Dorsolateral prefrontal cortex (tissue), 120 donors: ENCODE measurements at regions of chr1 and their contacts with region 1.

Region 1: GRCh38 chr1:84122780-84123382 is 21.2 kb upstream of the PRKACB start:
- DNase-seq: peak in 9 of 10 donors; percentile 27 to 85 (median 53)
- H3K4me3 ChIP-seq: no peak overlapping the region
- H3K27ac ChIP-seq: peak overlapping the region in 15 of 59 donors; percentile 0 to 70 (median 31)
- H3K27me3 ChIP-seq: no peaks in the 10 kb centered on the region
- CTCF ChIP-seq: peak; percentile 18 to 96 (median 76)

Region 2: GRCh38 chr1:83905315-83905907 is 217.5 kb before region 1 on chr1:
- intact Hi-C with region 1: loop called (anchors 5 kb)
- DNase-seq: no peak
- H3K4me3 ChIP-seq: peak overlapping the region in 1 of 59 donors; percentile 8
- H3K27ac ChIP-seq: peak overlapping the region in 8 of 59 donors; percentile 11 to 62 (median 38)
- H3K27me3 ChIP-seq: no peaks in the 10 kb centered on the region
- CTCF ChIP-seq: peak; percentile 44 to 85 (median 72)

Region 3: GRCh38 chr1:84037758-84038611 is 84.9 kb before region 1 on chr1:
- intact Hi-C with region 1: no loop called
- DNase-seq: no peak
- H3K4me3 ChIP-seq: no peak overlapping the region
- H3K27ac ChIP-seq: no peak overlapping the region
- H3K27me3 ChIP-seq: peaks cover 0 to under 1% (median 0%) of the 10 kb centered on the region in 45 donors
- CTCF ChIP-seq: no peak

Region 4: DNA sequence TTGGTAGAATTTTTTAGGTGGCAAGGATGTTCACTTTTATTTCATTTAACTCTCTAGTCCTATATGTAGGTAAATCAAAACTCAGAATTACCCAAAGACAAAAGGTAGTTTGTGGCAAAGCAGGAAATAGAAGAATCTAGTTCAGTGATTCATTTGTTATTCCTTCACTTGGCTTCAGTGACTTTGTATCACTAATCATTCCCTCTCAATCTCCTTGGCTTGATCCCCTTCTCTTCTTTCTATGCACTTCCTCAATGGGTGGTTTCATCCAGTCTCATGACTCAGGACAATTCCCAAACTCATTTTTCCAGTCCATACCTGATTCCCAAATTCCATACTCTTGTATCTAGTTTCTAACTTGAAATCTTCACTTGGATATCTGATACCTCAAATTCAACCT is 86.1 kb after region 1 on chr1:
- intact Hi-C with region 1: no loop called
- DNase-seq: no peak
- H3K4me3 ChIP-seq: no peak overlapping the region
- H3K27ac ChIP-seq: peak overlapping the region in 1 of 59 donors; percentile 3
- H3K27me3 ChIP-seq: no peaks in the 10 kb centered on the region
- CTCF ChIP-seq: no peak

Region 5: GRCh38 chr1:84271441-84272151 is 148.7 kb after region 1 on chr1:
- intact Hi-C with region 1: no loop called
- DNase-seq: no peak
- H3K4me3 ChIP-seq: no peak overlapping the region
- H3K27ac ChIP-seq: peak overlapping the region in 2 of 59 donors; percentile 1 to 28
- H3K27me3 ChIP-seq: no peaks in the 10 kb centered on the region
- CTCF ChIP-seq: no peak

Region 6: DNA sequence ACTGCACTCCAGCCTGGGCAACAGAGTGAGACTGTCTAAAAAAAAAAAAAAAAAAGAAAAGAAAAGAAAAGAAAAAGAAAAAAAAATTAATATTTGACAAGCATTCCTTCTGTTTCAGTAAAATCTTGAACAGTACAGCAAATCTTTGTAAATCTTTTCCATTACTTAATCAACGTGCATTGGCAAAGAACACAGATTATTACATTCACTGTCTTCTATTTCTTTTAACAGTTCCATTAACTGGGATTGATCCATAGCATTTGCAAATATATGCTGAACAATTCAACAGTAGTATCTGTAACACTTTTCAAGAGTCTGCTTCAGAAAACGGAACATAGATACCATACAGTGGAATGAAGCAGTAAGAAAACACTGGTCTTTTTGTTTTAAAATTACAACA is 188.4 kb after region 1 on chr1:
- intact Hi-C with region 1: no loop called
- DNase-seq: no peak
- H3K4me3 ChIP-seq: no peak overlapping the region
- H3K27ac ChIP-seq: peak overlapping the region in 1 of 59 donors; percentile 30
- H3K27me3 ChIP-seq: no peaks in the 10 kb centered on the region
- CTCF ChIP-seq: no peak

Region 7: DNA sequence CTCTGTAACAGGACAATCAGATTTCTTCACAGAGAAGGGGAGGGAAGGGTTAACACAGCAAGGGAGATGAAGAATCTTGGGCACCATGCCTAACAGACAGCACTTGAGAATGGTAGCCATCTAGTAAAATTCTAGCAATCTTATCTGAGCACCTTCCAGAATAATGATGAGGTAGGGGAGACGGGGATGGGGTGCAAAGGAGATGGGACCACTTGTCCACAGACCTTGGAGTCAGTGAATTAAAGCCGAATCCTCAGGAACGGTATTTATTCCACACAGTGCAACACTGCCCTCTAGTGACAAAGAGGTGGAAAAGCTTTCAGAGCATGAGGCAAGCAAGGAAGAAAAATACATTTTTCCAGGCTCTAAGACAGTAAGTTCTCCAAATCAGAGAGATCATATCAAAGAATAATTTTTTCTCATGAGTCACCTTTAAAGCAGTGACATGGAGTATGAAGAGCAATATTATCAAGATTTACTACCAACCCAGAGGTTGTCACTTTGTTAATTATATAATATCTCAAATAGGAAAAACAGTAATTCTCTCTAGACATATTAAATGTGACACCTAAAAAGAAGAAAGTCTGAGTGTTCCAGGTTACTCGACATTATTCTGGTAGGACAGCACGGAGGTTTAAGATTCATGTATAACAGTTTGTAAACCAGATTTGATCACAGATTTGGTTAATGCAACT is 813.4 kb after region 1 on chr1:
- intact Hi-C with region 1: loop called in 1 of 2 experiments (anchors 10 kb)
- DNase-seq: peak in 3 of 10 donors; percentile 30 to 46 (median 35)
- H3K4me3 ChIP-seq: peak overlapping the region in 13 of 59 donors; percentile 8 to 37 (median 25)
- H3K27ac ChIP-seq: no peak overlapping the region
- H3K27me3 ChIP-seq: no peaks in the 10 kb centered on the region
- CTCF ChIP-seq: peak; percentile 78 to 98 (median 91)